MCF 10A (cell line): ENCODE measurements at regions of chr11 and their contacts with region 1.

Region 1: GRCh38 chr11:102940714-102941588 is 14.6 kb downstream of the MMP13 start:
- DNase-seq: peak; percentile 80
- H3K4me3 Mint-ChIP-seq: no peak overlapping the region
- H3K27ac Mint-ChIP-seq: no peak overlapping the region
- H3K4me1 Mint-ChIP-seq: no peaks in the 10 kb centered on the region
- H3K27me3 Mint-ChIP-seq: no peaks in the 10 kb centered on the region
- CTCF ChIP-seq: peak; percentile 75

Region 2: GRCh38 chr11:102793677-102794446 is 147.1 kb before region 1 on chr11:
- CTCF ChIA-PET with region 1: interaction called, 13 read pairs
- POLR2A ChIA-PET with region 1: no interaction called
- intact Hi-C with region 1: no loop called
- DNase-seq: no peak
- H3K4me3 Mint-ChIP-seq: no peak overlapping the region
- H3K27ac Mint-ChIP-seq: no peak overlapping the region
- H3K4me1 Mint-ChIP-seq: peaks cover 10% of the 10 kb centered on the region
- H3K27me3 Mint-ChIP-seq: no peaks in the 10 kb centered on the region
- CTCF ChIP-seq: no peak

Region 3: DNA sequence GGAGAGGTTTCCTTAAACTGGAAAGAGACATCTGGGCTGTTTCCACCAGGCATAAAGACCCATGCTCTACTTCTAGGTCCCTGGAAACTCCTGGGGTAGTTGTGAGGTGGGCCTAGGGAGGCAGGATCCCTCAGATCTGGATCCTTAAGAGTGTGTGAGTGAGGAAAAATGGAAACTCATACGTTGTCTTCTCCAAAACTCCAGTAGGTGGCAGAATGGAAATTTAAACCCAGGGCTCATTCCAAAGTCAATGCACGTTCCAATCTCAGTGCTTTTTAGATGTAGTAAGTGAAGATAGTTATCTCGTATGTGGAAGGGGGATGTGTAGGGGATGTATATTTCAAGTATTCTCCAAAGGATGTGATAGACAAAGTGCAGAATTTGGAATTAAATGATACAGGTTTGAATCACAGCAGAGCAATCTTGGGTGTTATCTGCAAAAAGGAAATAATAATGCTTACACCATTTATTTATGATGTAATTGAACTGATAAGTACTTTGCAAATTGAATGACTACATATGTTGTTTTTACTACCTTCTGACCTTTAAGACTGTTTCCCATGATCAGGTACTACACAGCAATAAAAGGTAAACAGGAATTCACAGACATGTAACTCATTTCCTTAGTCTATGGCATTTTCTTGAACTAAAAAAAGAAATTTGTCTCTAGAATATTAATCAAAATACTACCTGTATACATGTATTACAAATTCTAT is 129.8 kb before region 1 on chr11:
- CTCF ChIA-PET with region 1: interaction called, 77 read pairs
- POLR2A ChIA-PET with region 1: interaction called, 4 read pairs
- intact Hi-C with region 1: loop called (anchors 1 kb)
- DNase-seq: peak; percentile 55
- H3K4me3 Mint-ChIP-seq: no peak overlapping the region
- H3K27ac Mint-ChIP-seq: no peak overlapping the region
- H3K4me1 Mint-ChIP-seq: peaks cover 17% of the 10 kb centered on the region
- H3K27me3 Mint-ChIP-seq: no peaks in the 10 kb centered on the region
- CTCF ChIP-seq: peak; percentile 62

Region 4: GRCh38 chr11:102920118-102920684 is 20.8 kb before region 1 on chr11:
- CTCF ChIA-PET with region 1: interaction called, 71 read pairs
- POLR2A ChIA-PET with region 1: interaction called, 11 read pairs
- intact Hi-C with region 1: loop called (anchors 2 kb)
- DNase-seq: no peak
- H3K4me3 Mint-ChIP-seq: no peak overlapping the region
- H3K27ac Mint-ChIP-seq: no peak overlapping the region
- H3K4me1 Mint-ChIP-seq: peaks cover 7% of the 10 kb centered on the region
- H3K27me3 Mint-ChIP-seq: no peaks in the 10 kb centered on the region
- CTCF ChIP-seq: no peak

Region 5: GRCh38 chr11:103055221-103055890 is 114.4 kb after region 1 on chr11:
- CTCF ChIA-PET with region 1: interaction called, 8 read pairs
- POLR2A ChIA-PET with region 1: no interaction called
- intact Hi-C with region 1: loop called (anchors 1 kb)
- DNase-seq: peak; percentile 42
- H3K4me3 Mint-ChIP-seq: no peak overlapping the region
- H3K27ac Mint-ChIP-seq: no peak overlapping the region
- H3K4me1 Mint-ChIP-seq: no peaks in the 10 kb centered on the region
- H3K27me3 Mint-ChIP-seq: no peaks in the 10 kb centered on the region
- CTCF ChIP-seq: peak; percentile 36